OCI-LY7 (cell line): ENCODE measurements at regions of chr1 and their contacts with region 1.

Region 1: GRCh38 chr1:157963713-157964112 is 29.7 kb upstream of the KIRREL1 start:
- DNase-seq: peak; percentile 71
- H3K4me3 ChIP-seq: no peak overlapping the region
- H3K27ac ChIP-seq: no peak overlapping the region
- H3K4me1 ChIP-seq: peaks cover 3% of the 10 kb centered on the region
- CTCF ChIP-seq: peak; percentile 88

Region 2: GRCh38 chr1:158117854-158118704 is 154.4 kb after region 1 on chr1:
- CTCF ChIA-PET with region 1: interaction called, 5 read pairs
- POLR2A ChIA-PET with region 1: no interaction called
- intact Hi-C with region 1: loop called (anchors 1 kb)
- DNase-seq: peak; percentile 77
- H3K4me3 ChIP-seq: no peak overlapping the region
- H3K27ac ChIP-seq: no peak overlapping the region
- H3K4me1 ChIP-seq: peaks cover 26% of the 10 kb centered on the region
- CTCF ChIP-seq: peak; percentile 87